Dorsolateral prefrontal cortex (tissue), 120 donors: ENCODE measurements at regions of chr15 and their contacts with region 1.

Region 1: GRCh38 chr15:44195151-44195740 is at the start of gene FRMD5:
- DNase-seq: peak; percentile 92 to 97 (median 96)
- H3K4me3 ChIP-seq: peak within 1 kb of the TSS; percentile 60 to 98 (median 86)
- H3K27ac ChIP-seq: peak within 1 kb of the TSS; percentile 36 to 100 (median 92)
- H3K27me3 ChIP-seq: no peaks in the 10 kb centered on the region
- CTCF ChIP-seq: peak; percentile 23 to 80 (median 61)
- total RNA-seq, gene FRMD5: 19.7 to 90.4 (median 41.9) TPM

Region 2: GRCh38 chr15:43552986-43553385 is 642.3 kb before region 1 on chr15:
- intact Hi-C with region 1: no loop called
- DNase-seq: no peak
- H3K4me3 ChIP-seq: no peak overlapping the region
- H3K27ac ChIP-seq: no peak overlapping the region
- H3K27me3 ChIP-seq: no peaks in the 10 kb centered on the region
- CTCF ChIP-seq: no peak

Region 3: GRCh38 chr15:44102675-44103254 is 92.5 kb before region 1 on chr15:
- intact Hi-C with region 1: loop called in 1 of 2 experiments (anchors 10 kb)
- DNase-seq: peak in 7 of 10 donors; percentile 50 to 87 (median 59)
- H3K4me3 ChIP-seq: peak overlapping the region in 11 of 59 donors; percentile 0 to 27 (median 10)
- H3K27ac ChIP-seq: peak overlapping the region; percentile 61 to 98 (median 93)
- H3K27me3 ChIP-seq: no peaks in the 10 kb centered on the region
- CTCF ChIP-seq: peak in 1 of 56 donors; percentile 9

Region 4: DNA sequence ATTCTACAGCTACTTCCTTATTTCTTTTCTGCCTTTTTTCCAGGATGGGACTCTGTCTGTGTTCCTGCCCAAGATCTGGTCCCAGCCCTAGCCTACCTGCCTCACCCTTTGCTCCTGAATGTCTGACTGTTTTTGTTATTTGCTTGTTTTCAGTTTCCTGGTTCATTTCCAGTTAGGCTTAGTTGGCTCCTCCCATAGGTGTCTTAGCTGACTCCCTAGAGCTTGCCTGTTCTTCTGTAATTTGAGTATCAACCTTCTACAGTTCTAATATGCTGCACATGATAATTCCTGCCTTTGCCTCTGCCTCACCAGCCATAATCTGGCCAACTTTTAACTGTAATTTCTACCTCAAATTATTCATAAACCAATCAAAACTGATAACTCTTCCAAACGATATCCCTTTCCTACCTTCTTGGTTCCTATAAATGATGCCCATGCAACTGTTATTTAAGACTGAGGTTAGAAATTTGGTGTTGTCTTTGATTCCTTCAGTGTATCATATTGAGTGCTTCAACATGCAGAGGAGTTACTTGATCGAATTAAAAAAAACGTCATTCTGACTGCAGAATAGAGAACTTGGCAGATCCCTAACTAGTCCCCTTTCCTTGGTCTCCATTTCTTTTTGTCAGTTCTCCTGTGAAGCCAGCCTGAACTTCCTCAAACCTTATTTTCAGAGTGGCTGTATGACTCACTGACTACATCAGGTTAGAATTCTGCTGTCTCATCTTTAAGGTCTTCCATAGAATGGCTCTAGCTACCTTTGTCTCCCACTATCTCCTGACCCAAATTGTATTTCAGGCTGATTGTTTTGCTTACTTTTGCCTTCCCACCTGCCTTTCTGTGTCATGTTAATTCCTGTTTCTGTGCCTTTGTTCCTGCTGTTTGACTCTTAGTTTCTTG is 101.6 kb after region 1 on chr15:
- intact Hi-C with region 1: no loop called
- DNase-seq: no peak
- H3K4me3 ChIP-seq: peak overlapping the region in 2 of 59 donors; percentile 4 to 6
- H3K27ac ChIP-seq: peak overlapping the region in 34 of 59 donors; percentile 2 to 71 (median 40)
- H3K27me3 ChIP-seq: no peaks in the 10 kb centered on the region
- CTCF ChIP-seq: no peak